Activated naive CD4-positive, alpha-beta T cell treated with anti-CD3 and anti-CD28 coated beads for 36 hours (primary cell): ENCODE measurements at regions of chr12 and their contacts with region 1.

Region 1: DNA sequence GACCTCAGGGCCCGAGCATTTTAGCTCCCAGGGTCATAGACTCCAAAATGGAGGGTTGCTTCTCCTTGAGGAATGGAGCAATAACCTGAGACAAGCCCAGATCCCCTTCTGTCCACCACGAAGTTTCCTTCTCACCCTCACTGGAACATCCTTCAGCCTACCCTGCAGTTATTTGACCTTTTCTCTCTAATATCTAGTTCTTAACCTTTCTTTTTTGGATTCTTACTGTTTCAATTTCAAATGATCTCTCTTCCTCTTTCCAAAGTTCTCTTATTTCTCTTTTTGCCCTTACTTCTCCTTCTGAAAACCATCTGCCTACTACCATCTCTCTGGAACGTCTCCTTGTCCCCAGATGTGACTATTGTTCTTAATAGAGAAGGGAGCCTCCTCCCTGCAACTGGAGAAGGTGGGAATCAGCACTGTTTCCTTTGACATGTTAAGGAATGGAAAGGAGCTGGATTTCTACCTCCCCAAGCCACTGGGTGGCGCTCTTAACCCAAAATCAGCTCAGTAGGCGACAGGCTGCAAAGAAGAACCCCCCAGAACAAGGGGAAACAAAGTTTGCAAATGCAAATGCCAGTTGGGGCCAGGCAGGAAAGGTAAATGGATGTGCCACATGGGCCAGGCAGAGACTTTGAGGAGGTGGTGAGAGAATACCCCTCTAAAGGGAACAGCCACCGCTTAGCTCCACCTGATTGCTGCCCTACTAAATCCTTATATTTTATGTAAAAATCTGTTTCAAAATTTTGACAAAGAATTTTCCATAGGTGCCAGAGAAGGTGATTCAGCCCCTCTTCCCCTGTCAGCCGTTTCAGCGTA is 22.4 kb upstream of the PDE1B start:
- DNase-seq: peak; percentile 72
- H3K4me3 Mint-ChIP-seq: no peak overlapping the region
- H3K27ac Mint-ChIP-seq: peak overlapping the region; percentile 46
- H3K4me1 Mint-ChIP-seq: peaks cover 22% of the 10 kb centered on the region
- H3K27me3 Mint-ChIP-seq: no peaks in the 10 kb centered on the region

Region 2: GRCh38 chr12:54273981-54274380 is 253.0 kb before region 1 on chr12:
- CTCF ChIA-PET with region 1: no interaction called
- intact Hi-C with region 1: loop called (anchors 1 kb)
- DNase-seq: no peak
- H3K4me3 Mint-ChIP-seq: no peak overlapping the region
- H3K27ac Mint-ChIP-seq: no peak overlapping the region
- H3K4me1 Mint-ChIP-seq: peaks cover 76% of the 10 kb centered on the region
- H3K27me3 Mint-ChIP-seq: no peaks in the 10 kb centered on the region

Region 3: DNA sequence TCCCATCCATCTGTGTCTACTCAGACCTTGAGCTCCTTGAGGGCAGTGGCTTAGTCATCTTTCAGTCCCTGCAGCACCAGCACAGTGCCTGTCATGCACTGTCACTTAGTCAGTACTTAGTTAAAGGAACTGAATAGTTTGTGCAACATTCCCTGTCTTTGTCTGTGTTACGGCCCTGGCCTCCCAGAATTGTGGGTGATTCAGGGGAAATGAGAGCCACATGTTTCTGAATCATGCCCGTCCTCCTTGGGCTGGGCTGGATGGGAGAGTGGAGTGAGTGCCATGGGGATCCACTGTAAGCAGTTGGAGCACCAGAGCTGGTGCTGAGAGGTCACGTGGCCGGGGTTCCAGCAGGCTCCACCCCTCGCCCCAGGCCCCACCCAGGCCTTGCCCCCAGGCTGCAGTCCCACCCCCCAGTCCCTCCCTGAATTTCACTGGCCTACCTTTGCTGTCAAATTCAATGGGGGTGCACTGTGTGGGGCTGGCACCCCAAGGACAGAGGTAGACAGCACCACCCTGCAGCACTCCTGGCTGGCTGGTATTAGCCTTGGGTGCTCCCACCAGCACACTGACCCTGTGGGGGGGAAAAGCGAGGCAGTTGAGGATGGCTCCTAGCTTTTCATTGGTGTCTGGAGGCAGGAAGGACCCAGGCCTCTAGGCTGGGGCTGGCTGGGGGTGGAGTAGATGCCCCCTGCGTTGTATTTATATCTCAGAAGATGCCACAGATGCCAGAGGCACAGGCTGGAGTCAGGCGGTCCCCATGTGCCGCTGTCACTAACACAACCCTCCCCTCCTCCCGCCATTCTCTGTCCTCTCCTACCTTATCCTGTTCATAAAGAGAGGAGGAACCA is 115.4 kb before region 1 on chr12:
- CTCF ChIA-PET with region 1: no interaction called
- intact Hi-C with region 1: loop called (anchors 1 kb)
- DNase-seq: peak; percentile 71
- H3K4me3 Mint-ChIP-seq: peak overlapping the region; percentile 38
- H3K27ac Mint-ChIP-seq: peak overlapping the region; percentile 96
- H3K4me1 Mint-ChIP-seq: peaks cover 58% of the 10 kb centered on the region
- H3K27me3 Mint-ChIP-seq: no peaks in the 10 kb centered on the region

Region 4: GRCh38 chr12:54439521-54440255 is 87.3 kb before region 1 on chr12:
- CTCF ChIA-PET with region 1: no interaction called
- intact Hi-C with region 1: no loop called
- DNase-seq: no peak
- H3K4me3 Mint-ChIP-seq: no peak overlapping the region
- H3K27ac Mint-ChIP-seq: no peak overlapping the region
- H3K4me1 Mint-ChIP-seq: peaks cover 13% of the 10 kb centered on the region
- H3K27me3 Mint-ChIP-seq: no peaks in the 10 kb centered on the region

Region 5: DNA sequence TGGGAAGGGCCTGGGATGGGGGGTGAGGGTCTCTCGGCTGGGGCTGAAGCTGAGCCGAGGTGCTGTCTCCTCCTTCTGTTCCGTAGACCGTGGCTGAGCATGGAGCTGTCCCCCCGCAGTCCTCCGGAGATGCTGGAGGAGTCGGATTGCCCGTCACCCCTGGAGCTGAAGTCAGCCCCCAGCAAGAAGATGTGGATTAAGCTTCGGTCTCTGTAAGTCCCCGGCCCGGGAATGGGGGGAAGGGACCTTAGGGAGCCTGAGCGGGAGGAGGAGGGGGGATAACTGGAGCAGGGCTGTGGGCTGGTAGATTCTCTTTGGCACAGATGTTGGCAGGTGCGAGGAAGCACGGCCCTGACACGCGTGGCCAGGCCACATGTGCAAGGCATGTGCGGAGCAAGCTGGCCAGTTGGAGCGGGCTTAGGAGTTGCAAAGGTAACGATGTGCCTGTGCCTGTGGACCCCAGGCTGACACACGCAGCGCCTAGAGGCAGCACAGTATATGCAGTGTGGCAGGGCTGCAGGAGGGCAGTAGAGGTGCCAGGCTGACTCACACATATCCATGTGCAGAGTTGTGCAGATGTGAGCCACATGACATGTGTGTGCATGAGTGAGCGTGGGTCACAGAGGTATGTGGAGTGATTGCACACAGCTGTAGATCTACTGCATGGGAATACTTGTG is 22.9 kb after region 1 on chr12:
- CTCF ChIA-PET with region 1: interaction called, 14 read pairs
- intact Hi-C with region 1: loop called (anchors 1 kb)
- DNase-seq: peak; percentile 63
- H3K4me3 Mint-ChIP-seq: peak overlapping the region; percentile 82
- H3K27ac Mint-ChIP-seq: no peak overlapping the region
- H3K4me1 Mint-ChIP-seq: peaks cover 36% of the 10 kb centered on the region
- H3K27me3 Mint-ChIP-seq: peaks cover 6% of the 10 kb centered on the region

Region 6: DNA sequence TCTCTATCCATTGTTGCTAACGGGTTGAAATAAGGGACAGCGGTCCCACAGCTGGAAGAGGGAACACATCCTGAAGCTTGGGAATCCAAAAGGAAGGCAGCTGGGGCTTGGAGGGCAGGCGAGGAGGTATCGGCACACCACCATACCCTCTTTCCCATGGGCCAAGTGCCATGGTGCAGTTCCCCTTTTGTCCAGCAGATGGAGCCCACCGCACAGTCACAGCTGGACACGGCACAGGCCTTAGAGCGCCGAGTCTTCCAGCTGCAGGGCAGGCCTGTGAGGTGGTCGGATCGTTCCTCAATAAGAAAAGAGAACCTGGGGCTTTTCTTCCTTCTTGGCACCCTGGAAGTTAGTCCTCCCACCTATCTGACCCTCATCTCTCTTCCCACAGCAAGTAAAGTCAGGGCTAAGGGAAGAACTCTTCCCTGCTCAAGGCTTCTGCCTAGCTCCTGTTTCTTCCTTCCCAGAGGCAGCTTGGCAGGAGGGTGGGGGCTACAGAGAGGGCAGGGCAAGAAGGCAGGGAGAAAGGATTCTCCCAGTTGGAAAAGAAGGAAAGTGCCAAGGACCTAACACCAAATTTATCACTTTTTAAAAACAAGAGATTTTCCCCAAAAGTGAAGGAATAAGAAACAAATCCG is 52.8 kb after region 1 on chr12:
- CTCF ChIA-PET with region 1: interaction called, 15 read pairs
- intact Hi-C with region 1: loop called (anchors 1 kb)
- DNase-seq: peak; percentile 93
- H3K4me3 Mint-ChIP-seq: no peak overlapping the region
- H3K27ac Mint-ChIP-seq: no peak overlapping the region
- H3K4me1 Mint-ChIP-seq: peaks cover 5% of the 10 kb centered on the region
- H3K27me3 Mint-ChIP-seq: peaks cover 6% of the 10 kb centered on the region

Region 7: DNA sequence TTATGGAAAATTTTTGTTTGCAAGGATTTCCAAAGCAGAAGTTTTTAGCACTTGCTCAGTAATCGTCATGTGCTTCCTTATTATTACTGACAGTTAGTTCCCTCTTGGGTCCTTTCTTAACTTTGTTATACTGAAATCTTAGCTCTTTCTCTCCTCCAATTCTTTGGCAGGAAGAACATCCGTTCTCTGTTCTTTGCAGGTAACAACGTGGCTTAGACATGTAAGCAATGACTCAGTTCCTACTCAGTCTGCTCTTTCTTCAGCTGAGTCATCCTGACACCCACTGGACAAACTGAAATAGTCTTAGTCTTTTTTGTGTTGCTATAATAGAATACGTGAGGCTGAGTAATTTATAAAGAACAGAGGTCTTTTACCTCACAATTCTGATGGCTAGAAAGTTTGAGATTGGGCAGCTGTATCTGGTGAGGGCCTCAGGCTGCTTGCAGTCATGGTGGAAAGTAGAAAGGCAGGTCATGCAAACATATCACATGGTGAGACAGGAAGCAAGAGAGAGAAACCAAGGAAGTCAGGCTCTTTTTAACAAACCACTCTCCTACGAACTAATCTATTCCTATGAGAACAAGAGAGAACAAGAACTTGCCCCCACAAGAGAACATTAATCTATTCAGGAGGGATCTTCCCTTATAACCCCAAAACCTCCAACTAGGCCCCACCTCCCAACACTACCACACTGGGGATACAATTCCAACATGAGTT is 408.4 kb after region 1 on chr12:
- CTCF ChIA-PET with region 1: interaction called, 3 read pairs
- intact Hi-C with region 1: loop called (anchors 1 kb)
- DNase-seq: peak; percentile 69
- H3K4me3 Mint-ChIP-seq: peak overlapping the region; percentile 51
- H3K27ac Mint-ChIP-seq: peak overlapping the region; percentile 93
- H3K4me1 Mint-ChIP-seq: peaks cover 64% of the 10 kb centered on the region
- H3K27me3 Mint-ChIP-seq: no peaks in the 10 kb centered on the region